HEK293 (cell line): ENCODE measurements at regions of chr2 and their contacts with region 1.

Region 1: DNA sequence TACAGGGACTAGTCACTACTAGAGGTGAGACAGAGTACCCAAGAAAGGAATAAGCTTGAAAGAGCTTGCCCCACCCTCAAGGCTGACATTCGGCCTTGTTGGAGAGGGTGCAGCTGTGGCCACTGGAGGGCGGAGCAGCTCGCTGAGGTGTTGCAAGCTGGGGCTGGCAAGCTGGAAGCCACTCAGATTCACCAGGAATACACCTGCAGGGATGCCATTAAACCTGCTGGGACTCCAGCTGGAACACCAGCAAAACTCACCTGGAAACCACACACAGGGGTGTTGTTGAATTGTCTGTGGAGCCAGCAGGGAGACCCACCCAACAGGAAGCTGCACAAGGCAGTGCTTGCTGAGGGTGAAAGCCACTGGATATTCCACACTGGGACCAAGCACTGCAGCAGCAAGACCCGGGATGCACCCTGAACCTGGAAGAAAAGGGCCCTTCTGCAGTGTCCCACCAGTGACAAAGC is 26.1 kb downstream of the KCTD18 start:
- H3K4me3 ChIP-seq: no peak overlapping the region
- H3K27ac ChIP-seq: no peak overlapping the region
- H3K4me1 ChIP-seq: no peaks in the 10 kb centered on the region; the same call in 1 of the 2 replicates
- CTCF ChIP-seq: peak; percentile 77

Region 2: DNA sequence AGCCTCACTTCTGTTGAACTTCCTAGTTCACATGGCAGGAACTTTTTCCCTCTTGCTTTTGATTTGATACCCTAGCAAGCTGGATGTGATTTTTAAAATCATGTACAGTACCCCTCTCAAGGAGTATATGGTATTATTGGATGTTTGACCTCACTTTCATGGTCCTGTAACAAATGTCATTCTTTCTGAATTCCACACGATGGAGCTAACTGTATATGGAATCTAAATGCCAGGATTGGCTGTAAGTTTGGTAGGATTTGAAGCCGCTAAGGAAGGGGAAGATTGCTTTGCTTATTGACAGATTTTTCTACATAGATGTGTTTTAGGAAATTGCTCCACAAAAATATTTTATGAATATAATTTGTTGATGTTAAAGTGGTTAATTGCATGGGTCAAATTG is 510.1 kb before region 1 on chr2:
- CTCF ChIA-PET with region 1: interaction called, 45 read pairs
- POLR2A ChIA-PET with region 1: no interaction called
- H3K4me3 ChIP-seq: no peak overlapping the region
- H3K27ac ChIP-seq: no peak overlapping the region
- H3K4me1 ChIP-seq: no peaks in the 10 kb centered on the region
- CTCF ChIP-seq: peak; percentile 58; the same call in 1 of the 2 replicates

Region 3: DNA sequence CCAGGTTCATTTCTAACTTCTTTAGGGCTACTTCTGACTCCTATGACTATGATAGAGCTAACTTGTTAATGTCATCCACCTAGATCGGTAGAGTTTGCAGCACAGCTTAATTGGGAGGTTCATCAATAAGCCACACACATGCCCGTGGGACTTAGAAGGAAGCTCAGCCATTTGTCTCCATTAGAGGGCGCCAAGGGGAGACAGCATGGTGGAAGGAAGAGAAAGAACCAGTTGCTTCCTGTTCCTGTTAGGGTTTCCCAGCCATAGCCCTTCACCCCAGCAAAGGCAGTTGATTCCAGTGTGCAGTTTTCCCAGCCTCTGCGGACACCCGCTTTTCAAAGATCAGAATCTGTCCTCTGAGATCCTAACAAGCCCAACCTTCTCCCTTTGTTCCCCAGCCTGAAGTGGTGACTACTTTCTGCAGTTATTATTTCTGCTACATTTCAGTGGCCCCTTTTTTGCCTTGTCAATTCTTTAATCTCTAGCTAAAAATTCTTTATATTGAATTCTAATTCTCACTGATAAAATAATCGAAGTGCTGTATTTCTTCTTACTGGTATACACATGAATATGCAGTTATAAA is 498.0 kb before region 1 on chr2:
- CTCF ChIA-PET with region 1: interaction called, 45 read pairs
- POLR2A ChIA-PET with region 1: no interaction called
- H3K4me3 ChIP-seq: no peak overlapping the region
- H3K27ac ChIP-seq: no peak overlapping the region
- H3K4me1 ChIP-seq: peaks cover 5% of the 10 kb centered on the region
- CTCF ChIP-seq: peak; percentile 50

Region 4: DNA sequence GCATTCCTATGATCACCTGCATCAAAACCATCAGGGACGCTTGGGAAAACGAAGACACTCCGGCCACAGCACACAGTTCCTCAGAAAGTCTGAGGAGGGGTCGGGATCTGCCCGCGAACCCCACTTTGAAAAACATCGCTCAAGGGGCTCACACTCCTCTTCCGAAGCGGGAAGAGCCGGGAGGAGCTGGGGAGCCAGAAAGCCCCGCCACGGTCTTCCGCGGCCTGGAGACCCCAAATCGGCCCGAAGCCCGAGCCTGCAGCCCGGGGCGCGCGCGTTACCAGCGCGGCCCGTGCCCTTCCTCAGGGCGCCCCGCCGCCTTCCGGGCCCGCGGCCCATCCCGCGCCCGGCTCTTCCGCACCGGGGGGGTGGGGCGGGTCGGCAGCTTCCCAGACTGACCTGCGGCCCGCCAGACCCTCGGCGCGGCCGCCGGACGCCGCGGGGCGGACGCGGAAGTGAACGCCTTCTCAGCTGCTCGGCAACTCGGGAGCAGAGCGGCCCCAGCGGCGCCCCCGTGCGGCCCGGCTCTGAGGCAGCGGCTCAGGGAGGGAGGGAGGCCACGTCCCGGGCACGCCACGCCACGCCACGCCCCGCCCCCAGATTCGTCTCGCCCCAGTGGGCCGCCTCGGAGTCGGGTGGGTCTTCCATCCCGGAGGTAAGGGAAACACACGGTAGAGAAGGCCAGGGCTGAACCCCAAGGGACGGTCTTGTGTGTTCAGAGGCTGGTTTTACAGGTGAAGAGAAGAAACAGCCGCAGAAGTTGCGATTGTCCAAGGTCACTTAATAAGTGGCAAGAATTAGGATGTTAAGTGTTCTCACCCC is 26.1 kb after region 1 on chr2 and contains the start of gene KCTD18:
- CTCF ChIA-PET with region 1: interaction called, 16 read pairs
- POLR2A ChIA-PET with region 1: no interaction called
- H3K4me3 ChIP-seq: peak within 1 kb of the TSS; percentile 67
- H3K27ac ChIP-seq: peak within 1 kb of the TSS; percentile 62; the same call in 1 of the 2 replicates
- H3K4me1 ChIP-seq: no peaks in the 10 kb centered on the region
- CTCF ChIP-seq: peak; percentile 78

Region 5: DNA sequence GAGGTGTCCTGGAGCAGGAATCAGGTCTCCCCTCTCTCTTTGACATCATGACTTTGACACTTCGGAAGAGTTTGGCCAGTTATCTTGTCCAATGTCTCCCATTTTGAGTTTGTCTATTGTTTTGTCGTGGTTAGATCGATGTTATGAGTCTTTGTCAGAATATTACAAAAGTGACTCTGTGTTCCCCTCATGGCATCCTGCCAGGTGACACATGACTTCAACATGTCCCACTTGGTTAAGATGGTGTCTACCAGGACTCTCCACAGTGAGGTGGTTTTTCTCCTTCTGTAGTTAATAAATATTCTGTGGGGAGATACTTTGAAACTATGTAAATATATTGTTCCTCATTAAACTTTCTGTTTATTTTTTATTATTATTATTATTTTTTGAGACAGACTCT is 251.3 kb after region 1 on chr2:
- CTCF ChIA-PET with region 1: interaction called, 22 read pairs
- POLR2A ChIA-PET with region 1: no interaction called
- H3K4me3 ChIP-seq: no peak overlapping the region
- H3K27ac ChIP-seq: no peak overlapping the region
- H3K4me1 ChIP-seq: peaks cover 5% of the 10 kb centered on the region; the same call in 1 of the 2 replicates
- CTCF ChIP-seq: no peak